Activated CD8-positive, alpha-beta memory T cell treated with anti-CD3 and anti-CD28 coated beads, Interleukin-2, amount 10 ng/mL, durations not matched to agents 7 days and 5 days (primary cell): ENCODE measurements at regions of chr9 and their contacts with region 1.

Region 1: DNA sequence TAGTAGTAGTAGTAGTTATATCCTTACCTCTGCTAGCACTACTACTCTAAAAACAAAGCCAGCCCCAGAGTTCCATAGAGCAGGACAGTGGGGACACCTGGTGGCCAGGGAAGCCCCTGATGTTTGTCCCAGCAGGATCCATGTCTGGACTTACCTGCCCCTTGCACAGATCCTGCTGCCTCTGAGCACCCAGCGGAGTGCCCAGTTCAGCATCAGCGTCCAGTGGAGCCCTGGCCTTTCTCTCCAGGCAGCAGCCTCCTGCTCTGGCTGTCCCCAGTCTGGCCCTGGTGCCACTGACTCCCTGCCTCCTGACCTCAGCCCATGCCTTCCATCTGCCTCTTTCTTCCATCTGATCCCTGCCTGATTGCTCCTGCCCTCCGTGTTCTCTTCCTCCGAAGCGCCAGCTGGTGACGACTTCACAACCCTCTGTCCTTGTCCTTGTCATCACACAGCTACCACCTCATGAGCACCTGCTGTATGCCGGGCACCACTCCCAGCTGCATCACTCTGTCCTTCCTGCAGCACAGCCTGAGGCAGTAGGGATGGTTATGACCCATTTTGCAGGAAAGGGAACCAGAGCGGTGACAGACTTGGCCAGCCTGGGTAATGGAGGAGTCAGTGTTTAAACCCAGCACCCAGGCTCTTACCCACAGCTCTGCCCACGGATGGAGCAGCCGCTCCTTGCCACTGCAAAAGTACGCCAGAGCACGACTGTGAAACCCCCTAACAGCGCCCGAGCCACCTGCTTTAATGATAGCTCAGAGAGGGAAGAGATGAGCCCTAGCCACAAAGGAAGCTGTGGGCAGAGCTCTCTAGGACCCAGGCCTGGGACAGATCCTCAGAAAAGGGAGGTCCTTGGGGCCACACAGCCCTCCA is 11.5 kb downstream of the SARDH start:
- DNase-seq: peak; percentile 72
- ATAC-seq: peak; percentile 66
- H3K4me3 Mint-ChIP-seq: no peak overlapping the region
- H3K27ac Mint-ChIP-seq: no peak overlapping the region
- H3K4me1 Mint-ChIP-seq: peaks cover 10% of the 10 kb centered on the region
- H3K27me3 Mint-ChIP-seq: peaks cover 24% of the 10 kb centered on the region

Region 2: DNA sequence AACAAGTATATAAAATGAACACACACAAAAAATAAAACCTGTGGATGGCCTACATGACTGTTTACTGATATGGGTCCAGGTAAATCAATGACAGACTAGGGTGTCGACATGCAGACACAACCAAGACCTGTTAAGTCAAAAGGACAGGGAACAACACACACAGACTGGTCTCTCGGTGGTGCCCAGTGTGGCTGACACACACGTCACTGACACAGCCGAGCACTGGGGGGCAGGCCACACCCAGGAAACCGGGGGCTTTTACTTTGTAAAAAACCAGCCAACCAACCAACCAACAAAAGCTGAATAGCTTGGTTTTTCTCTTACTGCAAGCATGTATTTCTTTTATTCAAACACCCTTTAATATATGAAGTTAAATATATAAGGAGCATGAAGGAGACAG is 122.4 kb before region 1 on chr9:
- CTCF ChIA-PET with region 1: interaction called, 12 read pairs
- DNase-seq: peak; percentile 62
- ATAC-seq: no peak
- H3K4me3 Mint-ChIP-seq: no peak overlapping the region
- H3K27ac Mint-ChIP-seq: no peak overlapping the region
- H3K4me1 Mint-ChIP-seq: peaks cover 8% of the 10 kb centered on the region
- H3K27me3 Mint-ChIP-seq: peaks cover 21% of the 10 kb centered on the region